A549 (cell line): ENCODE measurements at regions of chr10 and their contacts with region 1.

Region 1: GRCh38 chr10:78047314-78047891 is 13.7 kb downstream of the RPS24 start:
- DNase-seq: peak; percentile 70 to 86
- ATAC-seq: peak; percentile 71 to 81
- H3K4me3 ChIP-seq: no peak overlapping the region
- H3K27ac ChIP-seq: peak overlapping the region in 1 of 2 experiments; percentile 57; a peak in 3 of 6 replicates
- H3K4me1 ChIP-seq: no peaks in the 10 kb centered on the region; the same call in 2 of the 3 replicates
- CTCF ChIP-seq: peak; percentile 95
- EP300 ChIP-seq: no peak
- POLR2A ChIP-seq: no peak
- RAD21 ChIP-seq: peak; percentile 96

Region 2: DNA sequence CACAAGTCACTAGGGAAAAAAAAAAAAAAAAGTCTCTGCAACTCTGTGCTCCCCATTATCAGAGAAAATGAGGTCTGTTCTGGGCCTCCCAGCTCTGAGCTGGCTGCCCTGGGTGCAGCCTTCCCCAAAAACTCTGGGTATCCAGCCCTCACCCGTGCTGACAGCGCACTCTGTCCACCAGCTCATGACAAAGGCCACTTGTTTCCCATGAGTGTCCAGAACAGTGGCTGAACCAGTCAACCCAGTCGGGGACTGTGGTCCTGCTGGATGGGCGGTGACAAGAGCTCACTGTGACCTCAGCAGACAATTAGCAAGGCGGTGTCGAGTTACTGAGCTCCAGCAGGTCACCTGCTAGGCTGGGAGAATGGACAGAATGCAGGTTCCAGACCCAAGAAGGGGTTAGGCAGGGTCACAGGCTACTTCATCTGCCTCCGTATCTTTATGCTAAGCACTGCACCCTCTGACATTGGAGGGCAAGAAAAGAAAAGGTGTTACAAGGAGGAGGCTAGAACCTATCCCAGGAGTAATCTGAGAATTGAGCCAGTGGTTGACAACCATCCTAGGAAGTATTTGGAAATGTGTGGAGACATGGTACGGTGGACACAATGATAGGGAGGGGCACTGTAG is 158.0 kb before region 1 on chr10:
- CTCF ChIA-PET with region 1: no interaction called
- POLR2A ChIA-PET with region 1: no interaction called
- DNase-seq: no peak
- ATAC-seq: no peak
- H3K4me3 ChIP-seq: no peak overlapping the region
- H3K27ac ChIP-seq: no peak overlapping the region
- H3K4me1 ChIP-seq: peaks cover 30% of the 10 kb centered on the region
- CTCF ChIP-seq: no peak
- EP300 ChIP-seq: no peak
- POLR2A ChIP-seq: no peak
- RAD21 ChIP-seq: no peak

Region 3: GRCh38 chr10:78166261-78166660 is 118.9 kb after region 1 on chr10:
- CTCF ChIA-PET with region 1: interaction called, 14 read pairs
- POLR2A ChIA-PET with region 1: no interaction called
- DNase-seq: no peak
- ATAC-seq: no peak
- H3K4me3 ChIP-seq: no peak overlapping the region
- H3K27ac ChIP-seq: no peak overlapping the region
- H3K4me1 ChIP-seq: no peaks in the 10 kb centered on the region
- CTCF ChIP-seq: no peak
- EP300 ChIP-seq: no peak
- POLR2A ChIP-seq: no peak
- RAD21 ChIP-seq: no peak

Region 4: DNA sequence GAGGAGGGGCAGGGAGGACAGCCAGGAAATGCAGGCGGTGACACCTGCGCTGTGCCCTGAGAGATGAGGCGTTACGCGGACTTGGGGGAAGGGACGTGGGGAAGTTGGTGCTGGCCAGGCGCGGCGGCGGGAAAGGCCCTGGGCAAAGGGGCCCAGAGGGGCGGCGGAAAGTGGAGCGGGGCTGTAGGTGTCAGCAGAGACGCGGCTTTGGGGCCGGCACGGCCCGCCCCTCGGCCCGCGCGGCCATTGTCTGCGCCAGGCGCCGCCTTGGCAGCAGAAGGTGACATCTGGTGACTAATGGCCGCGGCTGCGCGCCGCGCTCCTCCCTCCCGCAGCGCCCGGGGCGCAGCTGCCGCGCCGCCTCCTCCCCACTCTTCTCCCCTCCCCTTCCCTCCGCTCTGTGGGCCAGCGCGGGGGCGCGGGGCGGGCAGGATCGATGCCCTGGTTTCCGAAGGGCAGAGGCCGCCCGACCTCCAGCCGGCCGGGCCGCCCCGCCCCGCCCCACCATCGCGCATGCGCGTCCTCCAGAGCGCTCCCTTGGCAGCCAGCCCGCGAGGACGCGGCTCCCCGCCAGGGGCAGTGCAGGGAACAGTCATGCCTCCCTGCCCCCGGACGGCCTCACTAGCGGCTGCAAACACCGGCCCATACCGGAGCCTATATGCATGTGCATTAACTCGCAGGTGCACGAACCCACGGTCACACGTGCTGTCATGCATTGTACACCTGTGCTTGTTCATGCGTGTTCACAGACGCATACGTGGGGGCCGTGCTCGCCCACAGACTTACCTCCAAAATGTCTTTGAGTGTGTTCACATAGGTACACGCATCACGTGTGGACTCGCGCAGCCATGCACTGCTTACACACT is 255.8 kb after region 1 on chr10:
- CTCF ChIA-PET with region 1: interaction called, 26 read pairs
- POLR2A ChIA-PET with region 1: no interaction called
- DNase-seq: peak; percentile 92 to 97
- ATAC-seq: peak; percentile 91 to 95
- H3K4me3 ChIP-seq: peak overlapping the region; percentile 58
- H3K27ac ChIP-seq: peak overlapping the region; percentile 92 to 93
- H3K4me1 ChIP-seq: peaks cover 15% of the 10 kb centered on the region
- CTCF ChIP-seq: peak; percentile 52
- EP300 ChIP-seq: no peak
- POLR2A ChIP-seq: peak; percentile 61
- RAD21 ChIP-seq: peak; percentile 55 to 58

Region 5: DNA sequence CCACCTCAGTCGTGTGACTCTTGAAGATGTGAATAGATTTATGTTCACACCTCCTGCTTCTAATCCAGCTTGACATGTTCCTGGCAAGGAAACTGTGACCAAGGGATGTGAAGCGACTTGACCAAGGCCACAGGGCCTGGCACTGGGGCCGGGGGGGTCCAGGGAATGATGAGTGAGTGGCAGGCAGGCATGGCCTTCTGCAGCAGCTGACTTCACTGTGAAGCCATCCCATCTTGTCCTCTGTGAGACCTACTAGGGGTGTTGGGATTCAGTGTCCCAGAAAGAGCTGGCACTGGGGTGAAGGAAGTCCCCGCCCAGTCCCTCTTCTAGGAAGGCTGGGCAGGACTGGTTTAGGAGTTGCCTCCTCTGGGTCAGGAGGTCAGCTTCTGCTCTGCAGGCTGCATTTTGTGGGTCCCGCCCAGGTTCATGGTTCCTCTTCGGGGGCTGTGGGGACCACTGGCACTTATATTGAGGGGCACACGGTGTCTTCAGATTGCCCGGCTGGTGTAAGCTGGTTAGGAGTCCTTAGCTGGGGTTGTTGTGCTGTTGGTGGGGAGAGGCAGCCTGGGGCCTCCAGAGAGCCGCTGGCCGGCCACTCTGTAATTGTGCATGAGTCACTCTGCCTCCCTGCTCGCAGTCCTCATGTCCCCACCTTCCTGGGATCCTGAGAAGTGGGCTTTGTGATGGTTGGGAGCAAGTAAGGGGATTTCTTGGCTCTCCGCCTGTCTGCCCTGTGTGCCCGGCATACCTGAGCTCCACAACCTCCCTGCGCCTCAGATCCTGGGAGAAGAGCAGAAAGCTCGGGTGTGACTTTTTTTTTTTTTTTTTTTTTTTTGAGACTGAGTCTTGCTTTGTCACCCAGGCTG is 1032.3 kb after region 1 on chr10:
- CTCF ChIA-PET with region 1: interaction called, 11 read pairs
- POLR2A ChIA-PET with region 1: no interaction called
- DNase-seq: peak; percentile 41 to 63
- ATAC-seq: peak; percentile 37 to 55; a peak in 4 of 6 replicates
- H3K4me3 ChIP-seq: no peak overlapping the region
- H3K27ac ChIP-seq: peak overlapping the region; percentile 69 to 98
- H3K4me1 ChIP-seq: peaks cover 100% of the 10 kb centered on the region
- CTCF ChIP-seq: no peak
- EP300 ChIP-seq: no peak
- POLR2A ChIP-seq: no peak
- RAD21 ChIP-seq: no peak